Ovary (tissue), 10 donors: ENCODE measurements at regions of chr12 and their contacts with region 1.

Region 1: DNA sequence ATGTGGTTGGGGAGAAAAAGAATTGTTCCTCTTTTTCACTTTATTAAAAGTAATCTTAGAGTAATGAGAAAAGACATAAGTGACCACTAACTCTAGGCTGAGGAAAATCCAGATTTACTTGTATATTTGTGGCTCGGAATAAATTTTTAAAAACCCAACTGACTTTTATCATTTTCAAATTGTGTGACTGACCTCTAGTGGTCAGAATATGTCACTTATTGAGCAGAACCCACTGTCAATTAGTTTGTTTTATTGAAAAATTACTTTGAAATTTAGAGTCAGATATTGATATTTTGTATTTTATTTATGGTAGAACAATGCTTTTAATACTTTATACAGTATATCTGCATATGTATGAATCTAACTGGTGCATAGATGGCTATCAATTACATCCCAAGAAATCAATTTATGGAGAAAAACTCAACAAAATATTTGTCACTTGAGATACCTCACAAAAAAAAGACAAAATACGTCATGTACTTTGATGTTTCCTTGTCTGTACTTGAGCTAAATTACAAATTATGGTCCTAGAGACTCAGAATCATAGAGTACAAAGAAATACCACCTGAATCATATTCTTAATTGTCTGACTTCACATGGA is 229.4 kb downstream of the CNTN1 start:
- DNase-seq: no peak
- H3K4me3 ChIP-seq: no peak overlapping the region
- H3K27ac ChIP-seq: no peak overlapping the region
- H3K4me1 ChIP-seq: no peaks in the 10 kb centered on the region
- H3K27me3 ChIP-seq: no peaks in the 10 kb centered on the region
- CTCF ChIP-seq: peak in 2 of 3 donors; percentile 32 to 59
- EP300 ChIP-seq: no peak
- POLR2A ChIP-seq: no peak

Region 2: DNA sequence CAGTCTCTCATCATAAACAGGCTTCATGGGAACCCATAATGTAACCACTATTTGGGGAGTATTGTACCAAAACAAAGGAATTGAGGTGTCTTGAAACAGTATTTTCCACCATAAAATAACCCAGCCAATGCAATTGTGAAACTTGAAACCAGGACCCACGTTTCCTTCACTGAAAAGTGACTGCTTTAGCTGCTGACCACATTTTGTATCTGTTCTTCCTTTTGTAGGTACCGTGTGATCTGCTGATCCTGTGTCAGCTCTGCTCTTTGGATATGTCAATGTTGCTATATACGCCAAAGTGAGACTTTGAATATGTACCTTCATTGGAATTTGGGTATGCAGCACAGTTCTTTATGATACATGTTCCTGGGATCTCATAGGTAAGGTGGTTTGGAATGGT is 324.5 kb before region 1 on chr12:
- intact Hi-C with region 1: no loop called
- DNase-seq: no peak
- H3K4me3 ChIP-seq: no peak overlapping the region
- H3K27ac ChIP-seq: no peak overlapping the region
- H3K4me1 ChIP-seq: no peaks in the 10 kb centered on the region
- H3K27me3 ChIP-seq: no peaks in the 10 kb centered on the region
- CTCF ChIP-seq: no peak
- EP300 ChIP-seq: no peak
- POLR2A ChIP-seq: no peak

Region 3: GRCh38 chr12:40622246-40622838 is 299.3 kb before region 1 on chr12:
- intact Hi-C with region 1: loop called (anchors 2 to 10 kb)
- DNase-seq: peak; percentile 48 to 75 (median 69)
- H3K4me3 ChIP-seq: no peak overlapping the region
- H3K27ac ChIP-seq: no peak overlapping the region
- H3K4me1 ChIP-seq: no peaks in the 10 kb centered on the region
- H3K27me3 ChIP-seq: no peaks in the 10 kb centered on the region
- CTCF ChIP-seq: peak; percentile 22 to 78 (median 62)
- EP300 ChIP-seq: no peak
- POLR2A ChIP-seq: no peak